ENCODE measurements at regions of chr2 and their contacts with region 1.

Region 1: DNA sequence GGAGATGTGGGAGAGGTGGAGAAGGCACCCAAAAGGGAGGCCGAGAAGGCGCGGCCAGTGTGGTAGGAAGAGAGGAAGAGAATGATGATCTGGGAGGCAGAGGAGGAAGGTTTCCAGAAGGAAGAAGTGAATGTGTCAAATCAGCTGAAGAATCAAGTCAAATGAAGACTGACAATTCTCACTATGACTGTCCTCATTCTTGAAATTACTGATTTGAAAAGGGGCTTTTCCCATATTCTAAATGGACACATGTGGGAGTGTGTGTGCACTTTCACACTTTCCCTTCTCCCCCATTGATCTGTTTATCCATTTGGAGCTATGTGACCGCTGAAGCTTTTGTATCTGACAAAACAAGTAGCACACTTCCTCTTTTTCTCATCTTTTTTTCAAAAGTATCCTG is 6.1 kb downstream of the AFF3 start:
- DNase-seq: peak; percentile 54
- CTCF ChIP-seq: no peak

Region 2: GRCh38 chr2:100235098-100235497 is 98.8 kb after region 1 on chr2:
- in situ Hi-C with region 1: loop called (anchors 10 kb)
- DNase-seq: peak; percentile 63
- CTCF ChIP-seq: no peak

Region 3: GRCh38 chr2:100381240-100381639 is 244.9 kb after region 1 on chr2:
- in situ Hi-C with region 1: no loop called
- DNase-seq: peak; percentile 62
- CTCF ChIP-seq: peak; percentile 76

Region 4: GRCh38 chr2:100513650-100514049 is 377.3 kb after region 1 on chr2:
- in situ Hi-C with region 1: no loop called
- DNase-seq: no peak
- CTCF ChIP-seq: no peak